Right ventricle myocardium superior (tissue), 1 donor: ENCODE measurements at regions of chr1 and their contacts with region 1.

Region 1: DNA sequence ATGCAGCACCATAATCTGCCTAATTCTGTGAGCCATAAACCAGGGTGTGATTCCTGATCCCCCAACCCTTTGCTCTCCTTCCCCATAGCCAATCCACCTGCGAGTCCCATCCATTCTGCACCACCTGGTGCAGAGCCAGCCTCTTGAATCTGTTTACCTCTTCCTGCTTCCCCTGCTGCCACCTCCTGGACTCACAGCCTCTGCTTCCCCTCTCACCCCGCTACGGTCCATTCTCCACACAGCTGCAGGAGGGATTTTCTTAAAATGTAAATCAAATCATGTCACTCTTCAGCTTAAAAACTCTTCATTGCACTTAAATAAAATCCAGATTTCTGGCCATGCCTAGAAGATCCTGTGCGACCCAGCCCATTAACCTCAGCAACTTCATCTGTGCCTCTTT is 186.7 kb downstream of the FOXD2 start:
- DNase-seq: no peak
- ATAC-seq: no peak

Region 2: GRCh38 chr1:47534436-47534835 is 90.1 kb before region 1 on chr1:
- intact Hi-C with region 1: no loop called
- DNase-seq: no peak
- ATAC-seq: peak; percentile 36

Region 3: DNA sequence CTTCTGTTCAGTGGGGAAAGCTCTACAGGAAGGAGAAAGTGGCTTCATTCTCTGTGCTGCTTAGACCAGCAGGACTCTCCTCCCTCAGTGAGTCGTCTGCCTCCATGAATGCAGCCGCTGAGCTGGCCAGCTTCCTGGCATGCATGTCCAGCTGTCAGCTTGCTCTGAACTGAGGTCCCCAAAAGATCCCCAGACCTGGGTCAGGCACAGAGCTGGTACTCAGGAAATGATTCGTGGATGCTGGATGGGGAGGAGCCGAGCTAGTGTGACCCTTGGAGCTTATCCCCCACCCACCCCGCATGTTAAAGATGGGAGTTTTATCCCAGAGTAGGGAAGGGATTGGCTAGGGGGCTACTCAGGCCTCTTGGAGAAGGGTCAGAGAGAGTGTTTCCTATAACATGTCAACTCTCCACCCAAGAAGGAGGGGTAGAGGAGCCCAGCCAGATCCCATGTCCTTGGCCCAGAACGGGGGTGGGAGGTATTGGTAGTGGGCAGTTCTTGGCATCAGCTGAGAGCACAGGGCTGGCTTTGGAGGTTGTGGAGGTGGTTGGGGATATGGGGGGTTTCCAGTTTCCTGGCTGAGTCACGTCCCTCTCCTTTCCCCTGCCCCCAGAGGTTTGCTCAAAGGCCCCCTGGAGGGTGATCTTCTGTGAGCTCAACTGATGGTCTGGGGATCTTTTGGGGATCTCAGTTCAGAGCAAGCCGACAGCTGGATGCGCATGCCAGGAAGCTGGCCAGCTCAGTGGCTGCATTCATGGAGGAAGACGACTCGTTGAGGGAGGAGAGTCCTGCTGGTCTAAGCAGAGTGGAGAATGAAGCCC is 76.6 kb before region 1 on chr1:
- intact Hi-C with region 1: loop called (anchors 5 kb)
- DNase-seq: no peak
- ATAC-seq: no peak